Heart left ventricle (tissue), 16 donors: ENCODE measurements at regions of chr3 and their contacts with region 1.

Region 1: GRCh38 chr3:126679318-126679751 is 24.4 kb upstream of the TXNRD3 start:
- DNase-seq: peak; percentile 73 to 88 (median 79)
- ATAC-seq: peak; percentile 76 to 94 (median 90)
- H3K4me3 ChIP-seq: no peak overlapping the region
- H3K27ac ChIP-seq: no peak overlapping the region
- H3K4me1 ChIP-seq: peaks cover 0 to 9% (median 5%) of the 10 kb centered on the region in 12 donors
- H3K27me3 ChIP-seq: peaks cover 0 to 40% (median 0%) of the 10 kb centered on the region in 9 donors
- CTCF ChIP-seq: peak; percentile 92 to 98 (median 96)
- POLR2A ChIP-seq: no peak

Region 2: DNA sequence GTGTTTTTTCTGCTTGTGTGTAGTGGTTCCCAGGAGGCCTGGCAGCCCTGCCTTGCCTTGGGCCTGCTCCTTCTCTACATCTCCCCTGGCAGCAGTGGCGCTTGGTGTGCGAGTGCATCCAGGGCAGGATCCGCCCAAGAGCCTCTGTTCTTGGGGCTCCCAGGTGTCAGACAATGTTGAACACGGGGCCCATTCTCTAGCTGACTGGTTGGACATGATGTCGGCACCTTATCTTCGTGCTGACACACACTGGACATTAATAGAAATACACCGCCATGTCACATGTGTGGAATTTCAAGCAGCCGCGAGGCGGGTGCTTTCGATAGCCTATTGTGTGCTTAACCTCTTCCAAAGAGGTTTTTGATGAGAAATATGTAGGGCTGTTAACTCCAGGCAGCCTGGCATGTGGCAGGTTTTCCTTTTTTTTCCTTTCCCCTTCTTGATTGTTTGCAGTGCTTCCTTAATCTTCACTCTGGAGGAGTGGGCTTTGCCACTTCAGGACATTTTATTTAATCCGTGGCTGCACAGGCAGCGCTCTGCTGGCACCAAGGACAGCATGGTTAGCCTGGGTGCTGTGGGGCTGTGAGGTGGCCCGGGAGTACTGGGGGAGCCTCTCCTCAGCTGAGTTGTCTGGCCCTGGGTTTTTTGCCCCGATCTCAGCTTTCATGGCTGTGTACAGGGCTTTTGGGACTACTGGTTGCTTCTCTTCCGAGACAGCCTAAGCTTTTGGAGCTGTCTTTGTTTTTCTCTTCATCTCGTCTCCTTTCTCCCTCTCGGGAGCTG is 67.3 kb after region 1 on chr3:
- intact Hi-C with region 1: loop called in 5 of 10 experiments (anchors 5 kb)
- DNase-seq: peak in 4 of 5 donors; percentile 72 to 85 (median 78)
- ATAC-seq: peak; percentile 89 to 94 (median 92)
- H3K4me3 ChIP-seq: peak overlapping the region in 6 of 12 donors; percentile 2 to 24 (median 14)
- H3K27ac ChIP-seq: peak overlapping the region; percentile 61 to 98 (median 88)
- H3K4me1 ChIP-seq: peaks cover 0 to 47% (median 20%) of the 10 kb centered on the region in 12 donors
- H3K27me3 ChIP-seq: no peaks in the 10 kb centered on the region
- CTCF ChIP-seq: peak in 3 of 12 donors; percentile 9 to 21 (median 19)
- POLR2A ChIP-seq: no peak

Region 3: GRCh38 chr3:126971891-126972351 is 292.6 kb after region 1 on chr3:
- intact Hi-C with region 1: loop called in 1 of 10 experiments (anchors 10 kb)
- DNase-seq: peak; percentile 68 to 84 (median 80)
- ATAC-seq: peak; percentile 68 to 93 (median 82)
- H3K4me3 ChIP-seq: no peak overlapping the region
- H3K27ac ChIP-seq: peak overlapping the region in 2 of 12 donors; percentile 67 to 82
- H3K4me1 ChIP-seq: peaks cover 0 to 28% (median 0%) of the 10 kb centered on the region in 12 donors
- H3K27me3 ChIP-seq: peaks cover 0 to 3% (median 0%) of the 10 kb centered on the region in 9 donors
- CTCF ChIP-seq: no peak
- POLR2A ChIP-seq: no peak

Region 4: GRCh38 chr3:126995926-126996512 is 316.7 kb after region 1 on chr3:
- intact Hi-C with region 1: loop called in 1 of 10 experiments (anchors 5 kb)
- DNase-seq: no peak
- ATAC-seq: no peak
- H3K4me3 ChIP-seq: no peak overlapping the region
- H3K27ac ChIP-seq: no peak overlapping the region
- H3K4me1 ChIP-seq: peaks cover 11 to 93% (median 50%) of the 10 kb centered on the region in 12 donors
- H3K27me3 ChIP-seq: no peaks in the 10 kb centered on the region
- CTCF ChIP-seq: peak in 2 of 12 donors; percentile 14 to 18
- POLR2A ChIP-seq: no peak

Region 5: GRCh38 chr3:127182471-127183367 is 503.4 kb after region 1 on chr3:
- intact Hi-C with region 1: loop called (anchors 2 to 10 kb)
- DNase-seq: peak in 1 of 5 donors; percentile 44
- ATAC-seq: peak in 1 of 4 donors; percentile 41
- H3K4me3 ChIP-seq: no peak overlapping the region
- H3K27ac ChIP-seq: no peak overlapping the region
- H3K4me1 ChIP-seq: no peaks in the 10 kb centered on the region
- H3K27me3 ChIP-seq: no peaks in the 10 kb centered on the region
- CTCF ChIP-seq: no peak
- POLR2A ChIP-seq: no peak

Region 6: DNA sequence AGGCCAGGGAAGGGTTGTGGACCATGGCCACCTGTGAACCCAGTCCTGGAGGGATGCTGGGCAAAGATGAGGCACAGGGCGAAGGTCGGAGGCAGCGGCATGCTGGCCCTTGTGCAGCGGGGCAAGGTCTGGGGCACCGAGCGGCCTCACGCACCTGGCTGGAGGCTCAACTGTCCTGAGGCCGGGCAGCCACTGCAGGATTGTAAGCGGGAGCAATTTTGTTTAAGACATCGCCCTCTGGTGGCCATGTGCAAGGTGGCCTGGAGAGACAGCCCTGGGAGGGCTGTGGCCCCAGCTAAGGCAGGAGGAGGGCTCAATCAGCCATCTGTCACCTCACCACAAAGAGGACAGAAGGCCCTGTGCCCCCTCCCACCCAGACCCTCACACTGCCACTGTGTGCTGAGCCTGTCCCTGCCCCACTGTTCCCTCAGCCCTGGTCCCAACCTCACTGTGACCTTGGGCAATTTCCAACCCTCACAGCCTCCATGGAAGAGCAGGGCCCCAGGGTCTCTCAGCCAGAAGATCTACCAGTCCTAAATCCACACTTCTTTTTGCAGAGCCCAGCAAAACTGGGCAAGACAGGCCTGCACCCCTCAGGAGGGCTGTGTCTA is 865.0 kb after region 1 on chr3:
- intact Hi-C with region 1: loop called in 9 of 10 experiments (anchors 1 to 10 kb)
- DNase-seq: peak; percentile 61 to 81 (median 76)
- ATAC-seq: peak in 3 of 4 donors; percentile 44 to 58 (median 46)
- H3K4me3 ChIP-seq: no peak overlapping the region
- H3K27ac ChIP-seq: no peak overlapping the region
- H3K4me1 ChIP-seq: peaks cover 0 to 16% (median 5%) of the 10 kb centered on the region in 12 donors
- H3K27me3 ChIP-seq: no peaks in the 10 kb centered on the region
- CTCF ChIP-seq: peak; percentile 68 to 85 (median 76)
- POLR2A ChIP-seq: no peak